ENCODE measurements at regions of chrX and their contacts with region 1.

Region 1: DNA sequence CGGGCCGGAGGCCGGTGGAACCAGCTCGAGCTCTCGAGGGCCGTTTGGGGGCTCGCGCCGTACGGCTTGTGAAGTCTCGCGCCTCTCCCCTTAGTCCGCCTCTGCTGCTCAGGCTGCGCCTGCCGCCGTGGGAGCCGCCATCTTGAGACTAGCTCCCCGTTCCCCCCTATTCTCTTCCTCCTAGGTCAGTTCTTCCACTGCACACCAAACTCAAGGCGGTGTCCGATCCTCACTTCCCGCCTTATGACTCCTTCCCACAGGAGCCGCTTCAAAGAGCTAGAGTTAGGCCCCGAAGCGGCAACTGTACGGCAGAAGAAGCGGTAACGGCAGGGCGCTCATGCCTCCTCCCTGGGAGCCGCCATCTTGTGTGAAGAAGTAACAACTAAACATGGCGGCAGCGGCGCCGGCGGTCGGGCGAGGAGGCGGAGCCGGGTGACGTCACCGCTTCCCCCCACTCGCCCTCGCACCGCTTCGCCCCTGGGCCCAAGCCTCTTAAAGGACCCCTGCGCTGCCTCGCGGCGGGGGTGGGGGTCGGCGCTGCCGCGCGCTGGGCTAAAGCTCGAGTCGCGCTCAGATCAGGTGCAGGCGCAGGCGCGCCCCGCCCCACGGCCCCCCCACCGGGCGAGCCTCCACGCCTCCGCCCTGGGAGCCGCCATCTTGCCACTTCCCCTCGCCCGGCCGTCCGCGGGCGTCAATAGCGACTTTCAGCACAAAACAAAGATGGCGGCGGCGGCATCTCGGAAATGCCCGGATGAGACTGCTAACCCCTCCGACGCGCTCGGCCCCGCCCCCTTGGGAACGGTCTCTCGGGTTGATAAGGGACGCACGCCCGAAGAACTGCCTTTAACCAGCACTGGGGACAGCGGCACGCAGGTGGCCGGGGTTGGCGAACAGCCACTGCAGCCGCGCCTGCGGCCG is at the start of gene HCFC1:
- DNase-seq: peak; percentile 80 to 98 (median 88)
- ATAC-seq: peak; percentile 46 to 50
- H3K4me3 Mint-ChIP-seq: peak within 1 kb of the TSS; percentile 94 to 100 (median 100)
- H3K27ac Mint-ChIP-seq: peak within 1 kb of the TSS; percentile 96 to 100 (median 100)
- H3K4me1 Mint-ChIP-seq: peaks cover 13 to 43% (median 38%) of the 10 kb centered on the region in 4 donors
- H3K27me3 Mint-ChIP-seq: no peaks in the 10 kb centered on the region
- polyA plus RNA-seq, gene HCFC1: 3.3 to 11.9 (median 7.9) TPM

Region 2: GRCh38 chrX:153927922-153928760 is 43.6 kb before region 1 on chrX:
- POLR2A ChIA-PET with region 1: interaction called, 131 read pairs
- DNase-seq: peak; percentile 82 to 97 (median 92)
- ATAC-seq: peak; percentile 70 to 73
- H3K4me3 Mint-ChIP-seq: peak overlapping the region; percentile 82 to 97 (median 91)
- H3K27ac Mint-ChIP-seq: peak overlapping the region; percentile 94 to 100 (median 99)
- H3K4me1 Mint-ChIP-seq: peaks cover 8 to 44% (median 30%) of the 10 kb centered on the region in 4 donors
- H3K27me3 Mint-ChIP-seq: no peaks in the 10 kb centered on the region

Region 3: DNA sequence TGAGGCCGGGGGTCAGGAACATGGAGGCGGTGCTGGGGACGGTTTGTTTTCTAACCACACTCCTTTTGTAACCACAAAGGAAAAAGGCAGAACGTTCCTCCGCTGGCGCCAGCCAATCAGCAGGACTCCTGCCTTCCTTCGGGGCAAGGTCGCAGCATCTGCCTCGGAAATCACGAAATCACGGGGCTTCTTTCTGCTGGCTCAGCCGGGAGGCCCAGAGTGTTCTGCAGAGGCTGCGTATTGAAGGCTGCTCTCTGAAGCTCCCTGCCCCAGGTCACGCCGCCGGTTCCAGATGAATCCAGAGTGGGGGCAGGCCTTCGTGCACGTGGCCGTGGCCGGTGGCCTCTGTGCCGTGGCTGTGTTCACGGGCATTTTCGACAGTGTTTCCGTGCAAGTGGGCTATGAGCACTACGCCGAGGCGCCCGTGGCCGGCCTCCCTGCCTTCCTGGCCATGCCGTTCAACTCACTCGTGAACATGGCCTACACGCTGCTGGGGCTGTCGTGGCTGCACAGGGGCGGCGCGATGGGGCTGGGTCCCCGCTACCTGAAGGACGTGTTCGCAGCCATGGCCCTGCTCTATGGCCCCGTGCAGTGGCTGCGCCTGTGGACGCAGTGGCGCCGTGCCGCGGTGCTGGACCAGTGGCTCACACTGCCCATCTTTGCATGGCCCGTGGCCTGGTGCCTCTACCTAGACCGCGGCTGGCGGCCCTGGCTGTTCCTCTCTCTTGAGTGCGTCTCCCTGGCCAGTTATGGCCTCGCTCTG is 10.2 kb after region 1 on chrX:
- POLR2A ChIA-PET with region 1: interaction called, 69 read pairs
- DNase-seq: peak in 8 of 10 donors; percentile 28 to 70 (median 51)
- ATAC-seq: peak; percentile 36 to 50
- H3K4me3 Mint-ChIP-seq: peak overlapping the region; percentile 52 to 80 (median 73)
- H3K27ac Mint-ChIP-seq: peak overlapping the region; percentile 87 to 98 (median 96)
- H3K4me1 Mint-ChIP-seq: peaks cover 15 to 51% (median 40%) of the 10 kb centered on the region in 4 donors
- H3K27me3 Mint-ChIP-seq: no peaks in the 10 kb centered on the region

Region 4: GRCh38 chrX:153989973-153990655 is 18.4 kb after region 1 on chrX:
- POLR2A ChIA-PET with region 1: interaction called, 69 read pairs
- DNase-seq: peak in 3 of 10 donors; percentile 36 to 55 (median 54)
- ATAC-seq: peak; percentile 59 to 74
- H3K4me3 Mint-ChIP-seq: peak overlapping the region; percentile 50 to 85 (median 71)
- H3K27ac Mint-ChIP-seq: peak overlapping the region; percentile 78 to 92 (median 90)
- H3K4me1 Mint-ChIP-seq: peaks cover 3 to 40% (median 24%) of the 10 kb centered on the region in 4 donors
- H3K27me3 Mint-ChIP-seq: no peaks in the 10 kb centered on the region

Region 5: GRCh38 chrX:154013614-154014360 is 42.1 kb after region 1 on chrX:
- POLR2A ChIA-PET with region 1: interaction called, 34 read pairs
- DNase-seq: peak; percentile 31 to 73 (median 49)
- ATAC-seq: peak; percentile 77 to 84
- H3K4me3 Mint-ChIP-seq: peak overlapping the region in 1 of 10 donors; percentile 45
- H3K27ac Mint-ChIP-seq: peak overlapping the region in 8 of 10 donors; percentile 17 to 80 (median 64)
- H3K4me1 Mint-ChIP-seq: peaks cover 8 to 29% (median 23%) of the 10 kb centered on the region in 4 donors
- H3K27me3 Mint-ChIP-seq: no peaks in the 10 kb centered on the region

Region 6: DNA sequence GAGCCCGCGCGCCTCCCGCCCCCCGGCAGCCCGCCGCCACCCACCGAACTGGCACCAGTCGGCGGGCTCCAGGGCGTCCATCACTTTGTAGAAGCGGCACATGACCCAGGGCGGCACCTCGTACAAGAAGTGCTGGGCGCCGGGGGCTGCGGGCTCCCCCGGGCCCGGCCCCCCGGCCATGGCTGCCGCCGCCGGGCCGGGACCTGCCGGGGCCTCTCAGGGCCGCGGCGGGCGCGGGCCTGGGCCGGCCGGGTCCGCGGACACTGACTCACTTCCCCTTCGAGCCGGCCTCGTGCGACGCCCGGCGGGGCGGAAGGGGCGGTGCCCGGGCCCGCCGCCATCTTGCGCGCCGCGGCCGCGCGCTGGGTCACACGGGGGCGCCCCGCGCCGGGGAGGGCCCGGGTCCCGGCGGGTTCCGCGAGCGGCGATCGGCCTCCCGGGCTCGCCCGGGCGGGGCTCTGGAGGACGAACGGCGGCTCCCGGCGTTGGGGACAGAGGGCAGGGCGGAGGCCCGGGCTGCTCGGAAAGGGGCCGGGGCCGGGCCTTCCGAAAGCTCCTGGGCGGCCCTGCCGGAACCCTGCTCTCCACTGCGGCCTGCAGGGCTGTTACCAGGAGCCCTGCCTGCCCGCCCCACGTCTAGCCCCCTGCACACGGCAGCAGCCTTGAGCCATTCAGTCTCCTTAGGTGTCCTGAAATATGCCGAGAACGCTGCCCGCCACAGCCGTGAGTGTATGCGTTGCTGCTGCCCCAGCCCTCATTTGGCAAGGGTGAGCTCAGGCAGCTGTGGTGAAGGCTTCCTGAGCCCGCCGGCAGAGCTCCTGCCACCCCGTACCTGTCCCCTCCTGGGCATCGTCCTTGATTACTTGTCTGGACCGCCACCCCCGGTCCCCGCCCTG is 48.2 kb after region 1 on chrX and contains the start of gene IRAK1:
- POLR2A ChIA-PET with region 1: interaction called, 34 read pairs
- DNase-seq: peak in 8 of 10 donors; percentile 15 to 53 (median 47)
- ATAC-seq: peak; percentile 77 to 80
- H3K4me3 Mint-ChIP-seq: peak within 1 kb of the TSS; percentile 79 to 91 (median 86)
- H3K27ac Mint-ChIP-seq: peak within 1 kb of the TSS; percentile 87 to 95 (median 94)
- H3K4me1 Mint-ChIP-seq: peaks cover 10 to 35% (median 22%) of the 10 kb centered on the region in 4 donors
- H3K27me3 Mint-ChIP-seq: no peaks in the 10 kb centered on the region
- polyA plus RNA-seq, gene IRAK1: 23.9 to 44.7 (median 27.8) TPM